K562 (cell line): ENCODE measurements at regions of chr13 and their contacts with region 1.

Region 1: DNA sequence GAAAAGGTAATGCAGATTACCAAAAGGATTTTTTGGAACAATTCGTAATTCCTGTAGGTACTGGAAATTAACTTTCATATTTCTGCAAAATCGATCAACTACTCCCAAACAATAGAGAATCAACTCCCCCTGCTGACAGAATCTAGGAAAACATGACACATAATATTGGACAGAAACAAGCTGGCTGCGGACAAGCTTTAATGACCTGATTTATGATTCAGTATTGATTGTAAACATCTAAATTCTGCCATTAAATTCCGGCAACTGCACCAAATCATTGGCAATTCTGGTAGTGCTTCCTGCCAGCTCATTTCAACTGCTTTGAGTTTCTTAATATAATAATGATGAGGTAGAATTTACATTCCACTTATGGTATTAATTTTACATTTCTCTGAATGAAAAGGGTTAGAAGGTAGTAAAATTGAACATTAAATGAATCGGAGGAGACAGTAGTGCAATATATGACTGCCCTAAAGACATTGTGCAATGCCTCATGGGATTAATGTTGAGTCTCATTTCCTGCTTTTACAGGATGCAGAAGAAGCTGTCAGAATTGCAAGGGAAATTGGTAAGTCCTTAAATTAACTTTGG is 146.5 kb downstream of the PCCA start:
- DNase-seq: peak; percentile 13 to 44 (median 24)
- ATAC-seq: no peak
- H3K4me3 ChIP-seq: no peak overlapping the region
- H3K27ac ChIP-seq: no peak overlapping the region
- H3K4me1 ChIP-seq: no peaks in the 10 kb centered on the region
- H3K27me3 ChIP-seq: no peaks in the 10 kb centered on the region
- CTCF ChIP-seq: peak; percentile 51 to 67 (median 51); a peak in 5 of 6 replicates
- EP300 ChIP-seq: no peak
- POLR2A ChIP-seq: no peak
- RAD21 ChIP-seq: peak; percentile 63 to 76

Region 2: DNA sequence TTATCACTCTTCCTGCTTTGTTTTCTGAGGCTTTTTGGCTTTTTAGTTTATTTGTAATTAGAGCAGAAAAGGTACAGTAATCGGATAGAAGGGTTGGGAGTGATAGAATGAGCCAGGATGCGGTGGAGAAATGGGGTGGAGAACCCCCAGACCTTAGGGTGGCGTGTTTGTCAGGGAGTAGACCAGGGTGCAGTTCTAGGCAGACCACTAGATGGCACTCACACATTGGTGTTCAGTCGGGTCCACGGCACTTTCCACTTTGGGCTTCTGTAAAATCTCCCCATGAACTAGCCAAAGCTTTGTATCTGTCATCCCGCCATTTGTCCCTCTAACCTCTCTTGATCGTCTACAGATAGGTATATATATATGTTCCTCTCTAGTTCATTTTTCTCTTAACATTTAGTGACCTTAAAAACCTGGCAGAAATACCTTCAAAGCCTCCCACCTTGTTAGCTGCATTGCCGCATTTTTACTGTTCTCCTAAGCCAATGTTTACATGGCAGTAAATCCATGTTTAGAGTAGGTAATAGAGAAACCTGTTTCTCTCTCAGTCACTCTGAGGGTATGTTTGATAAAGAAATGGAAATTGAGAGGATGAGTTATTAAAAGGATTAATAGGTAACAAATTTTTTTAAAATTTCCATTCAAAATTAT is 579.2 kb before region 1 on chr13:
- CTCF ChIA-PET with region 1: interaction called, 5 read pairs
- POLR2A ChIA-PET with region 1: no interaction called
- in situ Hi-C with region 1: loop called (anchors 25 kb)
- intact Hi-C with region 1: loop called (anchors 2 kb)
- DNase-seq: peak; percentile 63 to 73 (median 68)
- ATAC-seq: peak; percentile 94
- H3K4me3 ChIP-seq: no peak overlapping the region
- H3K27ac ChIP-seq: no peak overlapping the region
- H3K4me1 ChIP-seq: no peaks in the 10 kb centered on the region; a peak in 2 of 5 replicates
- H3K27me3 ChIP-seq: peaks cover 0 to 5% of the 10 kb centered on the region in 2 experiments; a peak in 1 of 5 replicates
- CTCF ChIP-seq: peak; percentile 79 to 88 (median 81)
- EP300 ChIP-seq: no peak
- POLR2A ChIP-seq: no peak
- RAD21 ChIP-seq: peak; percentile 62 to 81

Region 3: GRCh38 chr13:99916366-99917103 is 318.9 kb before region 1 on chr13:
- CTCF ChIA-PET with region 1: interaction called, 30 read pairs
- POLR2A ChIA-PET with region 1: no interaction called
- in situ Hi-C with region 1: no loop called
- intact Hi-C with region 1: loop called (anchors 1 kb)
- DNase-seq: peak; percentile 53 to 61 (median 58)
- ATAC-seq: peak; percentile 94
- H3K4me3 ChIP-seq: no peak overlapping the region
- H3K27ac ChIP-seq: no peak overlapping the region
- H3K4me1 ChIP-seq: no peaks in the 10 kb centered on the region; a peak in 1 of 5 replicates
- H3K27me3 ChIP-seq: peaks cover 4 to 13% of the 10 kb centered on the region in 2 experiments; a peak in 4 of 5 replicates
- CTCF ChIP-seq: peak; percentile 80 to 100 (median 99)
- EP300 ChIP-seq: no peak
- POLR2A ChIP-seq: no peak
- RAD21 ChIP-seq: peak; percentile 87 to 91

Region 4: GRCh38 chr13:100039740-100040139 is 195.7 kb before region 1 on chr13:
- CTCF ChIA-PET with region 1: no interaction called
- POLR2A ChIA-PET with region 1: no interaction called
- in situ Hi-C with region 1: no loop called
- intact Hi-C with region 1: loop called (anchors 10 kb)
- DNase-seq: no peak
- ATAC-seq: no peak
- H3K4me3 ChIP-seq: no peak overlapping the region
- H3K27ac ChIP-seq: no peak overlapping the region
- H3K4me1 ChIP-seq: no peaks in the 10 kb centered on the region
- H3K27me3 ChIP-seq: no peaks in the 10 kb centered on the region; a peak in 1 of 5 replicates
- CTCF ChIP-seq: no peak
- EP300 ChIP-seq: no peak
- POLR2A ChIP-seq: no peak
- RAD21 ChIP-seq: no peak